ENCODE measurements at regions of chr18 and their contacts with region 1.

Region 1: GRCh38 chr18:10519999-10520935 is 5.6 kb upstream of the NAPG start:
- DNase-seq: peak; percentile 84 to 89 (median 85)
- ATAC-seq: peak; percentile 74 to 90 (median 86)
- H3K4me3 ChIP-seq: peak overlapping the region in 1 of 12 donors; percentile 5
- H3K27ac ChIP-seq: peak overlapping the region in 3 of 12 donors; percentile 6 to 17 (median 10)
- H3K4me1 ChIP-seq: peaks cover 0 to 27% (median 20%) of the 10 kb centered on the region in 12 donors
- H3K27me3 ChIP-seq: no peaks in the 10 kb centered on the region
- CTCF ChIP-seq: peak; percentile 67 to 92 (median 86)
- POLR2A ChIP-seq: no peak

Region 2: GRCh38 chr18:9971313-9971920 is 548.9 kb before region 1 on chr18:
- intact Hi-C with region 1: loop called (anchors 1 to 2 kb)
- DNase-seq: peak in 4 of 5 donors; percentile 47 to 73 (median 66)
- ATAC-seq: peak; percentile 12 to 76 (median 68)
- H3K4me3 ChIP-seq: no peak overlapping the region
- H3K27ac ChIP-seq: no peak overlapping the region
- H3K4me1 ChIP-seq: peaks cover 0 to 12% (median 0%) of the 10 kb centered on the region in 12 donors
- H3K27me3 ChIP-seq: no peaks in the 10 kb centered on the region
- CTCF ChIP-seq: peak; percentile 68 to 88 (median 81)
- POLR2A ChIP-seq: no peak

Region 3: DNA sequence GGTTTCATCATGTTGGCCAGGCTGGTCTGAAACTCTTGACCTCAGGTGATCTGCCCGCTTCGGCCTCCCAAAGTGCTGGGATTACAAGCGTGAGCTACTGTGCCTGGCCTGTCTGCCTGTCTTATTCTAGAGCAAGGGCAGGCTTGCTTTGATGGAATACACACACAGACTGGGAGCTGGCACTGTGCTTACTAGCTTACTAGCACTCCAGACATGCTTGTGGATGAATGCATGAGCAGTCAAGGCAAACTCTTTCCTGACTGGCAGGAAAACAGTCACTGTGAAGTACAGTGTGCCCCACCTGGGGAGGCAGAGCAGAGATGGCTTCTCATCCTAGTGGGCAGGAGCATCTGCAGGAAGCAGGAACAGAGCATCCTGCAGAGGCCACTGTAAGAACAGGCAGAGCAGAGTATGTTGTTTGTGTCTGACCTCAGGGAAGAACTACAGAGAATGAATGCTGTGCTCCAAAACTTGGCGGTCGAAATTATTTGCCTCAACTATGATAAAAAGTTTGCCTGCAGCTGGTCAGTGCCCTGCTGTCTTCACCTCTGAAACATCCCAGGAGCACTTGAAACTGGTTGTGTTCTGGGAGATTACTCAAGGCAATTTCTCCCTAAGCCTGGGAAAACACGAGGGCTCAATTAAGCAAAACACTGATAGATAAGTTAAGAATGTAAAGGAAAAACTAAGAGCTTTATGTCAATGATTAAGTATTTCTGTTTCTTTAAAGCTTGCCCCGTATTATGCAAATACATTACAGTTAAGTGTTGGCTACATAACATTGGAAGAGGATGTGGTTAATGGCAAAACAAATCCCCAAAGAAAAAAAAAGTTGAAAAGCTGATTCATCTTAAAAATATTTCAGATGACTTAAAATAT is 504.1 kb before region 1 on chr18:
- intact Hi-C with region 1: loop called in 2 of 10 experiments (anchors 5 to 10 kb)
- DNase-seq: peak in 4 of 5 donors; percentile 34 to 60 (median 38)
- ATAC-seq: peak; percentile 76 to 89 (median 83)
- H3K4me3 ChIP-seq: no peak overlapping the region
- H3K27ac ChIP-seq: peak overlapping the region; percentile 49 to 86 (median 66)
- H3K4me1 ChIP-seq: peaks cover 0 to 50% (median 31%) of the 10 kb centered on the region in 12 donors
- H3K27me3 ChIP-seq: no peaks in the 10 kb centered on the region
- CTCF ChIP-seq: peak in 9 of 12 donors; percentile 24 to 64 (median 45)
- POLR2A ChIP-seq: no peak

Region 4: GRCh38 chr18:10094163-10094562 is 426.1 kb before region 1 on chr18:
- intact Hi-C with region 1: loop called in 1 of 10 experiments (anchors 10 kb)
- DNase-seq: no peak
- ATAC-seq: peak in 1 of 4 donors; percentile 36
- H3K4me3 ChIP-seq: no peak overlapping the region
- H3K27ac ChIP-seq: no peak overlapping the region
- H3K4me1 ChIP-seq: no peaks in the 10 kb centered on the region
- H3K27me3 ChIP-seq: no peaks in the 10 kb centered on the region
- CTCF ChIP-seq: no peak
- POLR2A ChIP-seq: no peak

Region 5: GRCh38 chr18:10230072-10230471 is 290.2 kb before region 1 on chr18:
- intact Hi-C with region 1: loop called in 1 of 10 experiments (anchors 10 kb)
- DNase-seq: peak in 1 of 5 donors; percentile 38
- ATAC-seq: no peak
- H3K4me3 ChIP-seq: no peak overlapping the region
- H3K27ac ChIP-seq: no peak overlapping the region
- H3K4me1 ChIP-seq: peaks cover 0 to 15% (median 4%) of the 10 kb centered on the region in 12 donors
- H3K27me3 ChIP-seq: no peaks in the 10 kb centered on the region
- CTCF ChIP-seq: no peak
- POLR2A ChIP-seq: no peak

Region 6: GRCh38 chr18:10299643-10300042 is 220.6 kb before region 1 on chr18:
- intact Hi-C with region 1: loop called in 1 of 10 experiments (anchors 10 kb)
- DNase-seq: no peak
- ATAC-seq: peak in 1 of 4 donors; percentile 24
- H3K4me3 ChIP-seq: no peak overlapping the region
- H3K27ac ChIP-seq: no peak overlapping the region
- H3K4me1 ChIP-seq: peaks cover 0 to 9% (median 0%) of the 10 kb centered on the region in 12 donors
- H3K27me3 ChIP-seq: no peaks in the 10 kb centered on the region
- CTCF ChIP-seq: no peak
- POLR2A ChIP-seq: no peak

Region 7: DNA sequence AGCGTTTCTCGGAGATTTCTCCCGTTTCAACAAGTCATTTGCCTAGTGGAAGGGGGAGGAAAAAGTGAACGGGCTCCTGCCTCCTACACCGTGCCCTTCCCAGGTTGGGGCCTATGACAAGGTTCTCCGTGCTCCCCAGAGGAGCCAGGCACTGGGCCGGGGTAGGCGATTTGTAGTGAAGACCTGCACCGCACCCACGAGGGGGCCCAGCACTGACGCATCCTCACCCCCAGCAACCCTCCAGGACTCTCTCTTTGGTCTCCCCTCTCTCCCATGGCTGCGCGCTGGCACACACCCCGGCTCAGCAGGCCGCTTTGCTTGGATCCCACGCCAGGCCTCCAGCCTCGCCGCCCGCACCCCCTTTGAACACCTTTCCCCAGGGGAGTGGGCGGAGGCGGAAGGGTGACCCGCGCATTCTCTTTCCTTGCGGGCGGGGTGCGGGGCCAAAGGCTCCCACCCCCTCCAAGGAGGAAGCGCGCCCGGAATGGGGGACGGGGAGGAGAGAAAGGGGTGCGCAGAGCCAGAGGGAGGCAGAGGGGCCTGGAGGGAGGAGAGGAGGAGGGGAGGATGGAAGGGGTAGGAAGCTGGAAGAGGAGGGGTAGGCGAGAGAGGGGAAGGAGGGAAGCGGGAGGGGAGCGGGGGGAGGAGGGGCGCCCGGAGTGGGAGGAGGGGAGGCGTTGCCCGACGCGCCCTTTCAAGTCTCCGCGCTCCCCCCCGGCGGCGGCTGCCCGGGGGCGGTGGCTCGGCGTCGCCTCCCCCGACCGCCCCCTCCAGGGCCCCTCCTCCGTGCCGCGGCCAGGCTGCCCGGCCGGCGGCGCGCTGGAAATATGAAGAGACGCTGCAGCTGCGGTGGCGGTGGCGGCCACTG is 66.2 kb before region 1 on chr18 and contains the start of gene APCDD1:
- intact Hi-C with region 1: loop called in 3 of 10 experiments (anchors 5 kb)
- DNase-seq: peak; percentile 72 to 85 (median 80)
- ATAC-seq: peak; percentile 57 to 89 (median 82)
- H3K4me3 ChIP-seq: peak within 1 kb of the TSS; percentile 48 to 88 (median 72)
- H3K27ac ChIP-seq: peak within 1 kb of the TSS; percentile 67 to 89 (median 80)
- H3K4me1 ChIP-seq: peaks cover 0 to 27% (median 11%) of the 10 kb centered on the region in 12 donors
- H3K27me3 ChIP-seq: peaks cover 0 to 36% (median 0%) of the 10 kb centered on the region in 9 donors
- CTCF ChIP-seq: peak in 2 of 12 donors; percentile 12 to 13
- POLR2A ChIP-seq: peak in 1 of 2 donors; percentile 56
- total RNA-seq, gene APCDD1: 7.5 to 65.4 (median 15.7) TPM

Region 8: DNA sequence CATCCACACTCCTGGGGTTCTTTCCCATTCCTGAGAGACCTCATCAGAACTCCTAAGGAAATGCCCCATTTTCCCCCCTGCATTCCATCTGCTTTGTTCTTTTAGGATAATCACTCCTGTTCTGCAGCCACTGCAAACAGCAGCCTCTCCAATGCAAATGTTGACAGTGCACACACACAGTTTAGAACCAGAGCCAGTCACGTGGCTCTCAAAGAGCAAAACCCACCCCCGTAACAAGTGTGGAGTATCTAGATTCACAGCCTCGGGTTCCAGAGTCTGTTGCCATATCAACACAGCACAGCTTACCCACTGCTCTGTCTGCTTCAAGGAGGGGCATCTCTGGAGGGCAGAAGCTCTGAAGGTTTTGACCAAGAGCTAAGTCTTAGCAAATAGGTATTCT is 185.5 kb after region 1 on chr18:
- intact Hi-C with region 1: no loop called
- DNase-seq: no peak
- ATAC-seq: no peak
- H3K4me3 ChIP-seq: no peak overlapping the region
- H3K27ac ChIP-seq: no peak overlapping the region
- H3K4me1 ChIP-seq: no peaks in the 10 kb centered on the region
- H3K27me3 ChIP-seq: no peaks in the 10 kb centered on the region
- CTCF ChIP-seq: no peak
- POLR2A ChIP-seq: no peak